CD8-positive, alpha-beta T cell (primary cell): ENCODE measurements at regions of chr6 and their contacts with region 1.

Region 1: GRCh38 chr6:139028658-139029469 is at the start of gene ABRACL:
- DNase-seq: peak; percentile 38 to 89 (median 74)
- ATAC-seq: peak; percentile 88
- H3K4me3 ChIP-seq: peak within 1 kb of the TSS; percentile 93 to 99
- H3K4me3 Mint-ChIP-seq: no peak within 1 kb of the TSS
- H3K27ac ChIP-seq: peak within 1 kb of the TSS; percentile 86 to 90
- H3K27ac Mint-ChIP-seq: peak within 1 kb of the TSS; percentile 96
- H3K4me1 ChIP-seq: peaks cover 24% of the 10 kb centered on the region
- H3K4me1 Mint-ChIP-seq: peaks cover 31% of the 10 kb centered on the region
- H3K27me3 ChIP-seq: no peaks in the 10 kb centered on the region
- H3K27me3 Mint-ChIP-seq: no peaks in the 10 kb centered on the region
- CTCF ChIP-seq: no peak
- total RNA-seq, gene ABRACL: 30.4 to 30.5 TPM

Region 2: GRCh38 chr6:138773177-138774091 is 255.4 kb before region 1 on chr6 and contains the start of gene CCDC28A:
- CTCF ChIA-PET with region 1: no interaction called
- POLR2A ChIA-PET with region 1: interaction called, 3 read pairs
- intact Hi-C with region 1: loop called in 1 of 2 experiments (anchors 5 kb)
- DNase-seq: peak; percentile 87 to 97 (median 92)
- ATAC-seq: peak; percentile 84
- H3K4me3 ChIP-seq: peak within 1 kb of the TSS; percentile 68 to 90
- H3K4me3 Mint-ChIP-seq: peak within 1 kb of the TSS; percentile 100
- H3K27ac ChIP-seq: peak within 1 kb of the TSS; percentile 88 to 96
- H3K27ac Mint-ChIP-seq: peak within 1 kb of the TSS; percentile 100
- H3K4me1 ChIP-seq: peaks cover 19% of the 10 kb centered on the region
- H3K4me1 Mint-ChIP-seq: peaks cover 33% of the 10 kb centered on the region
- H3K27me3 ChIP-seq: no peaks in the 10 kb centered on the region
- H3K27me3 Mint-ChIP-seq: no peaks in the 10 kb centered on the region
- CTCF ChIP-seq: no peak
- total RNA-seq, gene CCDC28A: 38.2 to 39.4 TPM

Region 3: DNA sequence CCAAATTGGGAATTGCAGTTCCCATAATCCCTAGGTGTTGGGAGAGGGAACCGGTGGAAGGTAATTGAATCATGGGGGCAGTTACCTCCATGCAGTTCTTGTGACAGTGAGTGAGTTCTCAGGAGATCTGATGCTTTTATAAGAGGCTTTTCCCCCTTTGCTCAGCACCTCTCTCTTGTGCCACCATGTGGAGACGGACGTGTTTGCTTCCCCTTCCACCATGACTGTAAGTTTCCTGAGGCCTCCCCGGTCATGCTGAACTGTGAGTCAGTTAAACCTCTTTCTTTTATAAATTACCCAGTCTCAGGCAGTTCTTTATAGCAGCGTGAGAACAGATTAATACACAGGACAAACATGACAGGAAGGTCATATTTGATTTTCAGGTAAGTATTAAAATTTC is 80.7 kb after region 1 on chr6:
- CTCF ChIA-PET with region 1: interaction called, 4 read pairs
- POLR2A ChIA-PET with region 1: interaction called, 10 read pairs
- intact Hi-C with region 1: loop called (anchors 2 to 5 kb)
- DNase-seq: peak in 3 of 9 experiments; percentile 39 to 50 (median 42)
- ATAC-seq: no peak
- H3K4me3 ChIP-seq: no peak overlapping the region
- H3K4me3 Mint-ChIP-seq: no peak overlapping the region
- H3K27ac ChIP-seq: no peak overlapping the region
- H3K27ac Mint-ChIP-seq: peak overlapping the region; percentile 64
- H3K4me1 ChIP-seq: peaks cover 52% of the 10 kb centered on the region
- H3K4me1 Mint-ChIP-seq: peaks cover 73% of the 10 kb centered on the region
- H3K27me3 ChIP-seq: no peaks in the 10 kb centered on the region
- H3K27me3 Mint-ChIP-seq: no peaks in the 10 kb centered on the region
- CTCF ChIP-seq: peak; percentile 28

Region 4: DNA sequence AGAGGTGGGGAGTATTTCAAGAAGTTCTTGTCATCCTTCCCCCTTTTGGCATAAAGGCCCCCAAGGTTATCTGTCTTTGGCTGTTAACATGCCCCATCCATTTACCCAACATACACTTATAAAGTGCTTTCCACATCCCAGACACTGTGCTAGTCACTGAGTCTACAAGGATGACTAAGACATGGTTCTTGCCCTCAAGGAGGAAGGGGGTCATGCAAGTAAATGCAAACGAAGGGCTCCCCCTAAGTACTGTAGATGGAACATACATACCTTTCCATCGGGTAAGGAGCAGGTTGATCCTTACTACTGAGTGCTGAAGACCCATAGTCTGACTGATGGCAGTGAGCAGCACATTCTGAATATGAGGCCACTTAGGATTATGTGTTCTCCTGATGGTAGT is 144.3 kb after region 1 on chr6:
- CTCF ChIA-PET with region 1: no interaction called
- POLR2A ChIA-PET with region 1: no interaction called
- intact Hi-C with region 1: loop called in 1 of 2 experiments (anchors 5 kb)
- DNase-seq: peak in 4 of 9 experiments; percentile 32 to 74 (median 50)
- ATAC-seq: peak; percentile 84
- H3K4me3 ChIP-seq: no peak overlapping the region
- H3K4me3 Mint-ChIP-seq: peak overlapping the region; percentile 40
- H3K27ac ChIP-seq: peak overlapping the region in 1 of 2 experiments; percentile 34
- H3K27ac Mint-ChIP-seq: peak overlapping the region; percentile 80
- H3K4me1 ChIP-seq: peaks cover 92% of the 10 kb centered on the region
- H3K4me1 Mint-ChIP-seq: peaks cover 93% of the 10 kb centered on the region
- H3K27me3 ChIP-seq: no peaks in the 10 kb centered on the region
- H3K27me3 Mint-ChIP-seq: no peaks in the 10 kb centered on the region
- CTCF ChIP-seq: no peak